Activated T-helper 1 cell treated with anti-CD3 and anti-CD28 coated beads, Interleukin-12 subunit alpha, Interleukin-12 subunit beta, Interleukin-2, Interleukin-4 antibody, amounts not matched to agents 30 ng/mL and 10 ng/mL and 1 ng/mL, durations not matched to agents 14 hours and 24 hours and 36 hours (primary cell): ENCODE measurements at regions of chr12 and their contacts with region 1.

Region 1: DNA sequence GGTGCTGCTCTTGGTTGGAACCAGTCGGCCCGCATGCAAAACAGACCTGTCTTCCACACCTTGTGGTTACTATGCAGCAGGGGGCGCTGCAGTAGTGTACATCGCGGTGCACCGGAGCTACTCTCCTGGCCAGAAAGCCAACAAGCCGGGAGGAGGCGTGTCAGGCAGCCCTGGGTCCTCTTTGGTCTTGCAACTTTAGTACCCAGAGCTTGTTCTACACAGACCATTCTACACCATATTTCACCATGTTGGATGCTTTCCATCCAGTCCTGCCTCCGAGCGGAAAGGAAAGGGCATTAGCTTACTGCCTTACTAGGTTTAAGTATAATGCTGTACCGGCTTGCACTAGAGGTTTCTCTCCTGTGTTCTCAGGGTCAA is 927 bp upstream of the TMTC2 start:
- DNase-seq: peak; percentile 82
- H3K4me3 Mint-ChIP-seq: peak overlapping the region; percentile 92
- H3K27ac Mint-ChIP-seq: peak overlapping the region; percentile 92
- H3K4me1 Mint-ChIP-seq: peaks cover 40% of the 10 kb centered on the region
- H3K27me3 Mint-ChIP-seq: peaks cover 10% of the 10 kb centered on the region

Region 2: GRCh38 chr12:82358200-82359114 is 327.3 kb before region 1 on chr12 and contains the starts of genes CCDC59 and METTL25:
- intact Hi-C with region 1: loop called (anchors 1 kb)
- DNase-seq: peak; percentile 94
- H3K4me3 Mint-ChIP-seq: peak within 1 kb of the TSS; percentile 94
- H3K27ac Mint-ChIP-seq: peak within 1 kb of the TSS; percentile 98
- H3K4me1 Mint-ChIP-seq: peaks cover 53% of the 10 kb centered on the region
- H3K27me3 Mint-ChIP-seq: no peaks in the 10 kb centered on the region
- total RNA-seq, gene CCDC59: 84.7 and 101 TPM in 2 replicates
- total RNA-seq, gene METTL25: 6.9 and 8.4 TPM in 2 replicates

Region 3: DNA sequence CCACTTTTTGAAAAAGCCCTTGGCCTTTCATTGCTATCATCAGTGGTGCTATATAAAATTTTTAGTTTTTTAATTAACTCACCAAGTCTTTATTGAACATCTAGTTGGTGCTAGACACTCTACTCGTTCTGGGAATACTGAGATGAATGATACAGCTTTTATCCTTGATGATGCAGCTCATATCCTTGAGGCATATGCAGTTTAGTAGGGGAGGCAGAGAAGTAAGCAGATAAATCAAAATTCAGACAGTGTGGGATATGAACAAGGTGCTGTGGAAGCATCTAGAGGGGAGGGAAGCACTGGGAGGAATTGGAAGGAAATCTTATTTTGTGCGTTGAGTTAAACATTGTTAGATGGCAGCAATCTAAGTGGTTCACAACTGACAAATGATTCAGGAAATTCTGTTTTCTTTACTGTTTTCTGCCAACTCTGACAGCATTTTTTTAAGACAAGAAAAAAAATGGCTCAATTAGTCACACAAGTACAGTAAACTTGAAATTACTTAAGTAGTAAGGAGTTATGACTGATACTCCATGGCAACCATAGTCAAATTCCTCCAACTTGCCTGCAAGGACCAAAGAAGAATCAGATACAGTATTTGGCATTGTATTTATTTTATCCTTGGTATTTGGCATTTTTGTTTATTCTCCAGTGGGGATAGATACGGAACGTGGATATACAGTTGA is 120.2 kb after region 1 on chr12:
- intact Hi-C with region 1: loop called (anchors 5 kb)
- DNase-seq: no peak
- H3K4me3 Mint-ChIP-seq: no peak overlapping the region
- H3K27ac Mint-ChIP-seq: no peak overlapping the region
- H3K4me1 Mint-ChIP-seq: no peaks in the 10 kb centered on the region
- H3K27me3 Mint-ChIP-seq: peaks cover 3% of the 10 kb centered on the region

Region 4: DNA sequence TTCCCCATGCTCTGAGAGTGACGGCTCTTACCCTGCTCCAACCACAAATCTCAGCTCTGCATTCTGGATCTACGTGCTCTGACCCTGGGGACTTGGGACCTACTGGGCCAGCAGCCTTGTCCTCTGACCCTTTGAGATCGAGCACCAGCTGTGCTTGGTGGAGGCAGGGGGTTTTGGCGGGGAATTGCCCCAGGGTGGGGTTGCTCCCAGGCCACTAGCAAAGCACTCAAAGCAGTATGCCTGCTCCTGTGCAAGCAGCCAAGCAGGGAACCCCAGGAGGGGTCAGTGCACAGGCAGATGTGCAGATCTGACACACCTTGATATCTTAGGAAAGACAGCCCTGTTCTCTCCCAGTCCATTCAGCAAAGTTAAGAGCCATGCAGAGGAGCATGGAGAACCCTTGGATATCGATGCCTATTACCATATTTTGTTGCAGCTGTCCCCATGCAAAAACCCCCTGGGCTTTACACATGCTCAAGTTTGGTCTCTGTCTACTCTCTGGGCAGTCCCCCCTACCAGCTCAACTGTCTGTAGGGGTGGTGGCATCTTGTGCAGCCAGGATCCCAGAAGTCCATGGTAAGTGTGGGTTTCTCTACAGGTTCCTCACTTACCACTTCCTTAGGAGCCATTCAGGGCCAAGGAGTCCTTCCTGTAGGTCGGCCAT is 319.9 kb after region 1 on chr12:
- intact Hi-C with region 1: loop called (anchors 10 kb)
- DNase-seq: no peak
- H3K4me3 Mint-ChIP-seq: no peak overlapping the region
- H3K27ac Mint-ChIP-seq: no peak overlapping the region
- H3K4me1 Mint-ChIP-seq: no peaks in the 10 kb centered on the region
- H3K27me3 Mint-ChIP-seq: no peaks in the 10 kb centered on the region

Region 5: GRCh38 chr12:83031196-83031595 is 345.4 kb after region 1 on chr12:
- intact Hi-C with region 1: no loop called
- DNase-seq: no peak
- H3K4me3 Mint-ChIP-seq: no peak overlapping the region
- H3K27ac Mint-ChIP-seq: no peak overlapping the region
- H3K4me1 Mint-ChIP-seq: no peaks in the 10 kb centered on the region
- H3K27me3 Mint-ChIP-seq: no peaks in the 10 kb centered on the region

Region 6: GRCh38 chr12:83823431-83823963 is 1137.7 kb after region 1 on chr12:
- intact Hi-C with region 1: loop called (anchors 1 kb)
- DNase-seq: no peak
- H3K4me3 Mint-ChIP-seq: no peak overlapping the region
- H3K27ac Mint-ChIP-seq: no peak overlapping the region
- H3K4me1 Mint-ChIP-seq: no peaks in the 10 kb centered on the region
- H3K27me3 Mint-ChIP-seq: no peaks in the 10 kb centered on the region